AG04449 (cell line): ENCODE measurements at regions of chr6 and their contacts with region 1.

Region 1: GRCh38 chr6:150865406-150866146 is at the start of gene MTHFD1L:
- DNase-seq: peak; percentile 60
- H3K4me3 ChIP-seq: peak within 1 kb of the TSS; percentile 78
- CTCF ChIP-seq: peak; percentile 72

Region 2: GRCh38 chr6:150876598-150876997 is 11.0 kb after region 1 on chr6:
- CTCF ChIA-PET with region 1: interaction called, 25 read pairs
- POLR2A ChIA-PET with region 1: interaction called, 11 read pairs
- DNase-seq: no peak
- H3K4me3 ChIP-seq: no peak overlapping the region
- CTCF ChIP-seq: no peak

Region 3: DNA sequence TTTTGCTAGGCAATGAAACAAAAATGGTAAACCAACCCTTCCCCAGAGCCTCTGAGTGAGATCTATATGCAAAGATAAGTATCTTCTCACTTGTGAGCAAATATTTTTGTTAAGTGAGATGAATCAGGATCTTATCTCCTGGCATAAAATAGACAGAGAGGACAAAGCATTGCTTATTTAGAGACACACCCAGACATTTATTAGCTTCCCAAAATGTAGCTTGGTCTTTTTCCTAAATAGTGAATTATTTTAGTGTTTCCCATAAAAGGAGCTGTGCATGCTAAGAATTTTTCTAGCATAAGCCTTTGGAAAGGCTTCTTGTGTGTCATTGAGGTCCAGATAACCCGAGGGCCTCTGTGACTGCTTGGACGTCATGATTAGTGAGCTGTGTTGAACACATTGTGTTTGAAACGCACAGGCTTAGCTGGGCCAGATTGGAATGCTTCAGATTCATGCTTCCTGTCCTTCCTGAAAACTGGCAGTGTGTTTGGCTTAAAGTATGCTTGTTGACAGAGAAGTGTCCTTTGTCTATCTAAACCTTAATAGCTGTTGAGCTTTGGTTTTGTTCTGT is 16.4 kb after region 1 on chr6:
- CTCF ChIA-PET with region 1: interaction called, 25 read pairs
- POLR2A ChIA-PET with region 1: interaction called, 11 read pairs
- DNase-seq: peak; percentile 96
- H3K4me3 ChIP-seq: no peak overlapping the region
- CTCF ChIP-seq: no peak